Activated naive CD8-positive, alpha-beta T cell treated with anti-CD3 and anti-CD28 coated beads, Interleukin-2, amount 10 ng/mL, durations not matched to agents 7 days and 5 days (primary cell): ENCODE measurements at regions of chr17 and their contacts with region 1.

Region 1: DNA sequence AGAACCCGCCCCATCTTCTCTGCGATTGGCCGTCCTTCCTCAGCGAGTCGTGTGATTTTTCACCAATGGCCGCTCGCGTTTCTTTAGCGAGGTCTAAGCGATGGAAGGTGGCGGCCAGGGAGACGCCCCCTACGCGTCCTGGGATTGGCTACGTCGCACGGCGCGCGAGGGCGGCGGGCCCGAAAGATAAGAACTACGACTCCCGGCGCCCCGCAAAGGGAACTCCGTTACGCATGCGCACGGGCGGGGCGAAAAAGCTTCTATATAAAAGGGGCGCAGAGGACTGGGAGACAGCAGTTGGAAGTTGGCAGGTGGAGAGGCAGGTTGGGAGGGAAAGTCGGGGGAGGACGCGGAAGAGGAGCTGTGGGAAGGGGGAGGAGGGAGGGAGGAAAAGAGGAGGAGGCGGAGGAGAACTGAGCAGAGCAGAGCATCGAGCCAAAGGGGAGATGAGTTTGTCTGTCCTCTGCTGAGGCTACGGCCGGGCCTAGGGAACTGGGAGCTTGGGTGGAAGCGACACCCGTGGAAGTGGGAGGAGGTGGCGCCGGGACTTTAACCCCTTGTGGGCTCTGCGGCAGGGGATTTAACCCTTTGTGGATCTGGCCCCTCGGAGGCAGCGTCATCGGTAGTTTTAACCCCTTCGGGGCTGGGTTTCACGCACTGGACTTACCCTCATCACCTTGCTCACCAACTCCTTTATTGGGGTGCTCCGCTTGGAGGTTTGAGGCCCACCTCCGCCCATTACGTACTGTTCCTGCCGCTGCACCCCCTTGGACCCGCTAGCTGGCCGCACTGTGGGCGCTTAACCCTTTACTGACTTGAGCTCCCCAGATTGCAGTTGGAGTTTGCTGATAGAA is at the start of gene HEXIM1:
- DNase-seq: peak; percentile 98
- ATAC-seq: peak; percentile 77
- H3K4me3 Mint-ChIP-seq: peak within 1 kb of the TSS; percentile 99
- H3K27ac Mint-ChIP-seq: peak within 1 kb of the TSS; percentile 100
- H3K4me1 Mint-ChIP-seq: peaks cover 29% of the 10 kb centered on the region
- H3K27me3 Mint-ChIP-seq: no peaks in the 10 kb centered on the region
- total RNA-seq, gene HEXIM1: 33.6 to 33.7 TPM

Region 2: GRCh38 chr17:45021607-45022287 is 126.7 kb before region 1 on chr17:
- POLR2A ChIA-PET with region 1: no interaction called
- DNase-seq: peak; percentile 85
- ATAC-seq: peak; percentile 82
- H3K4me3 Mint-ChIP-seq: peak overlapping the region; percentile 29
- H3K27ac Mint-ChIP-seq: no peak overlapping the region
- H3K4me1 Mint-ChIP-seq: peaks cover 17% of the 10 kb centered on the region
- H3K27me3 Mint-ChIP-seq: peaks cover 33% of the 10 kb centered on the region

Region 3: GRCh38 chr17:45161019-45161825 is 12.8 kb after region 1 on chr17:
- POLR2A ChIA-PET with region 1: interaction called, 290 read pairs
- DNase-seq: peak; percentile 96
- ATAC-seq: peak; percentile 97
- H3K4me3 Mint-ChIP-seq: peak overlapping the region; percentile 99
- H3K27ac Mint-ChIP-seq: peak overlapping the region; percentile 99
- H3K4me1 Mint-ChIP-seq: peaks cover 36% of the 10 kb centered on the region
- H3K27me3 Mint-ChIP-seq: no peaks in the 10 kb centered on the region

Region 4: DNA sequence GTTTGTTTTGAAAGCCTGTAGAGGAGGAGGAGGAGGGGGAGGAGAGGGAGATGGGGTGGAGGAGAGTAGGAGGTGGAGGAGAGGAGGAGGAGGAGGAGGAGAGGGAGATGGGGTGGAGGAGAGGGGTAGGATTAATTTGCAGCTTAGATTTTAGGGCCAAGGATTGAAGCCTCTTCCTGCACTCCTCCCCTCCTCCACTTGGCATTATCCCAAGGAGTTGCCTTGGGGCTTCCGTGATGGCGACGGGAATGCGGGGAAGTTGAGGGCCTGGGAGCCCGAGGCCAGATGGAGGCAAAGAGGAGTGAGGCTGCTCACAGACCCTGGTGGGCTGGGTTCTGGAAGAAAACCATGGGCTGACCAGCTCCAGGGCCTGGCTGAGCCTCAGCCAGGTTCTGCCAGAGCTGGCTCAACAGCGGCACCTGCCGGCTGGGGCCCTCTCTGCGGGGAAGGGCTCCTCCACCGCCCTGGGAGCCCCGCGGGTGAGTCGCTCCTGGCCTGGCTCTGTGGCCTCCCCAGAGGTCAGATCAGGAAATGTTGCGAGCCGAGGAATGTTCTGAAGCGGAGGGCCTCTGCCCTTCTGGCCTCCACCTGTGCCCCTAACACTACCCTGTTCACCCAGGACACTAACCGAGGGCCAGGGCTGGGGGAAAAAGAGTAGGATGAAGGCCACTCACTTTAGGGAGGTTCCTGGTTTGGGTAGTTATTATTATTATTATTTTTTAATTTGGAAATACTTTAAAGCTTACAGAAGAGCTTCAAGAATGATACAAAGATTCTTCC is 49.3 kb after region 1 on chr17:
- POLR2A ChIA-PET with region 1: interaction called, 51 read pairs
- DNase-seq: peak; percentile 96
- ATAC-seq: peak; percentile 100
- H3K4me3 Mint-ChIP-seq: no peak overlapping the region
- H3K27ac Mint-ChIP-seq: no peak overlapping the region
- H3K4me1 Mint-ChIP-seq: peaks cover 4% of the 10 kb centered on the region
- H3K27me3 Mint-ChIP-seq: no peaks in the 10 kb centered on the region

Region 5: GRCh38 chr17:45228763-45229539 is 80.5 kb after region 1 on chr17:
- POLR2A ChIA-PET with region 1: interaction called, 39 read pairs
- DNase-seq: peak; percentile 76
- ATAC-seq: peak; percentile 33
- H3K4me3 Mint-ChIP-seq: peak overlapping the region; percentile 100
- H3K27ac Mint-ChIP-seq: peak overlapping the region; percentile 99
- H3K4me1 Mint-ChIP-seq: peaks cover 69% of the 10 kb centered on the region
- H3K27me3 Mint-ChIP-seq: no peaks in the 10 kb centered on the region

Region 6: GRCh38 chr17:45284176-45285140 is 136.0 kb after region 1 on chr17:
- POLR2A ChIA-PET with region 1: no interaction called
- DNase-seq: no peak
- ATAC-seq: peak; percentile 34
- H3K4me3 Mint-ChIP-seq: no peak overlapping the region
- H3K27ac Mint-ChIP-seq: peak overlapping the region; percentile 76
- H3K4me1 Mint-ChIP-seq: peaks cover 26% of the 10 kb centered on the region
- H3K27me3 Mint-ChIP-seq: no peaks in the 10 kb centered on the region

Region 7: GRCh38 chr17:45307290-45308015 is 159.0 kb after region 1 on chr17:
- POLR2A ChIA-PET with region 1: interaction called, 13 read pairs
- DNase-seq: no peak
- ATAC-seq: peak; percentile 6
- H3K4me3 Mint-ChIP-seq: peak overlapping the region; percentile 51
- H3K27ac Mint-ChIP-seq: peak overlapping the region; percentile 77
- H3K4me1 Mint-ChIP-seq: peaks cover 67% of the 10 kb centered on the region
- H3K27me3 Mint-ChIP-seq: no peaks in the 10 kb centered on the region